A549 (cell line): ENCODE measurements at regions of chr9 and their contacts with region 1.

Region 1: DNA sequence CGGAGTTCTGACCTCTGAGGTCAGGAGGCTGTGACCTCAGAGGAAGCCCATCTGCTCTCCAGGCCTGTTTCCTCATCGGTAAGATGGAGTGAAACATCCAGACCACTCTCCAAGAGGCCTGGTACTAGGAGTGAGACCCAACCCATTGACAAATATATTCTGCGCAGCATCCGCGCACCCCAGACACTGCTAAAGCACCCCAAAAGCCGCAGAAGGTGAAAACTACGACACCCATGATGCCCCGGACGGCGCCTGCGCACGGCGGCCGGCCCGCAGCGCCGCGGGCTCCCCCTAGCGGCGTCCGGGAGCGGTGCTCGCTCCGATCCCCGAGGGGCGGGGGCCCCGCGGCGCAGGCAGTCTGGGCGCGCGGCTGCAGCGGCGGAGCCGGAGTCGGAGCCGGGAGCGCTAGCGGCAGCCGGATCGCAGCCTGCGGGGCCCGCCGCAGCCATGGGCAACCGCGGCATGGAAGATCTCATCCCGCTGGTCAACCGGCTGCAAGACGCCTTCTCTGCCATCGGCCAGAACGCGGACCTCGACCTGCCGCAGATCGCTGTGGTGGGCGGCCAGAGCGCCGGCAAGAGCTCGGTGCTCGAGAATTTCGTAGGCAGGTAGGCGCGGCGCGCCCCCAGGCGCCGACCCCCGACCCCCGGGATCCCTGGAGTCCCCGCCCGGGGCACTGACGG is at the start of gene DNM1:
- DNase-seq: peak; percentile 62 to 89
- ATAC-seq: peak; percentile 75 to 77
- H3K4me3 ChIP-seq: peak within 1 kb of the TSS; percentile 96
- H3K27ac ChIP-seq: peak within 1 kb of the TSS; percentile 95 to 99
- H3K4me1 ChIP-seq: peaks cover 53% of the 10 kb centered on the region
- CTCF ChIP-seq: peak; percentile 94
- EP300 ChIP-seq: no peak
- POLR2A ChIP-seq: peak; percentile 54
- RAD21 ChIP-seq: peak in 1 of 2 experiments; percentile 44; a peak in 2 of 5 replicates
- polyA plus RNA-seq, gene DNM1: 60.2 and 70.7 TPM in 2 replicates

Region 2: GRCh38 chr9:128182893-128183588 is 20.1 kb before region 1 on chr9:
- CTCF ChIA-PET with region 1: interaction called, 12 read pairs
- POLR2A ChIA-PET with region 1: no interaction called
- DNase-seq: no peak
- ATAC-seq: peak; percentile 12 to 43; a peak in 4 of 6 replicates
- H3K4me3 ChIP-seq: no peak overlapping the region
- H3K27ac ChIP-seq: no peak overlapping the region
- H3K4me1 ChIP-seq: no peaks in the 10 kb centered on the region
- CTCF ChIP-seq: no peak
- EP300 ChIP-seq: no peak
- POLR2A ChIP-seq: no peak
- RAD21 ChIP-seq: no peak

Region 3: GRCh38 chr9:128191406-128192046 is 11.6 kb before region 1 on chr9 and contains the start of gene CIZ1:
- CTCF ChIA-PET with region 1: interaction called, 20 read pairs
- POLR2A ChIA-PET with region 1: no interaction called
- DNase-seq: peak; percentile 84 to 85
- ATAC-seq: peak; percentile 86 to 90
- H3K4me3 ChIP-seq: peak within 1 kb of the TSS; percentile 86
- H3K27ac ChIP-seq: peak within 1 kb of the TSS; percentile 98 to 99
- H3K4me1 ChIP-seq: peaks cover 17% of the 10 kb centered on the region
- CTCF ChIP-seq: peak; percentile 92
- EP300 ChIP-seq: no peak
- POLR2A ChIP-seq: peak; percentile 59
- RAD21 ChIP-seq: peak in 1 of 2 experiments; percentile 37; a peak in 1 of 5 replicates
- polyA plus RNA-seq, gene CIZ1: 39.2 and 50.3 TPM in 2 replicates

Region 4: DNA sequence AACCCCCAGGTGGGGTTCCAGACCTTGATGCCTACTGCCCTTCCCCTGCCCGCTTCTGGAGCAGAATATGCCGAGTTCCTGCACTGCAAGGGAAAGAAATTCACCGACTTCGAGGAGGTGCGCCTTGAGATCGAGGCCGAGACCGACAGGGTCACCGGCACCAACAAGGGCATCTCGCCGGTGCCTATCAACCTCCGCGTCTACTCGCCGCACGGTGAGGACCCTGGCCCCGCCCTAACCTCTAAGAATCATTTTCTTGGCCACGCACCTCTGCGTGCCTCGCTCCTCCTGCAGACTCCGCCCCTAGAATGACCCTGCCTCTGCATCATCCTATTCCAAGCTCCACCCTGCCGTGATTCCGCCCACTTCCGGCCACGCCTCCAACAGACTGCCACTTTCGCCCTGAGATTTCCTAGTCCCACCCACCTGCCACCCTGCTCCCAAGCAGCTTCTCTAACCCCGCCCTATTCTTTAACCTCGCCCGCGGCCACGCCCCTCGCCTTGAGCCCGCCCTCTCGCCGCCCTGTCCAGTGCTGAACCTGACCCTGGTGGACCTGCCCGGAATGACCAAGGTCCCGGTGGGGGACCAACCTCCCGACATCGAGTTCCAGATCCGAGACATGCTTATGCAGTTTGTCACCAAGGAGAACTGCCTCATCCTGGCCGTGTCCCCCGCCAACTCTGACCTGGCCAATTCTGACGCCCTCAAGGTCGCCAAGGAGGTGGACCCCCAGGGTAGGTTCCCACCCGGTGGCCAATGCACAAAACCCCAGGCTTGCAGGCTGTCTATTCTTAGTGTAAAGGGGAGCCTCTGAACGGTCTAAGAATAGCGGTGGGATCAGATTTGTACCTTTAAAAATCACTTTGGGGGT is 15.6 kb after region 1 on chr9:
- CTCF ChIA-PET with region 1: interaction called, 82 read pairs
- POLR2A ChIA-PET with region 1: interaction called, 6 read pairs
- DNase-seq: peak; percentile 96 to 97
- ATAC-seq: peak; percentile 59 to 83
- H3K4me3 ChIP-seq: no peak overlapping the region; the same call in 2 of the 3 replicates
- H3K27ac ChIP-seq: peak overlapping the region; percentile 95 to 99
- H3K4me1 ChIP-seq: peaks cover 52% of the 10 kb centered on the region
- CTCF ChIP-seq: no peak
- EP300 ChIP-seq: no peak
- POLR2A ChIP-seq: no peak
- RAD21 ChIP-seq: no peak

Region 5: DNA sequence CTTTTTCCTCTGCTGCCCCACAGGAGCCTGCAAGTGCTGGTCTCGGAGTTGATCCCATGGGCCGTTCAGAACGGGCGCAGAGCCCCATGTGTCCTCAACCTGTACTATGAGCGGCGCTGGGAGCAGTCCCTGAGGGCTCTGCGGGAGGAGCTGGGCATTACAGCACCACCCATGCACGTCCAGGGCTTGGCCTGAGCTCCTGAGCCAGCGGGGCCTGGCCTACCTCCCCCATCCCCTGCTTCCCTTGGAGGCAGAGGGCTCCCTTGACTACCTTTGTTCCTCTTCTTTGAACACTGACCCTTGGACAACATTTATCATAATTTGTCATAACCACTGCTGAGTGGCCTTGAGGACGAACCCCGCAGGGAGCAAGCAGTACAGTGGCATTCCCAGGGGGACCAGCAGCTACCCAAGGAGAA is 130.3 kb after region 1 on chr9:
- CTCF ChIA-PET with region 1: no interaction called
- POLR2A ChIA-PET with region 1: no interaction called
- DNase-seq: no peak
- ATAC-seq: no peak
- H3K4me3 ChIP-seq: no peak overlapping the region
- H3K27ac ChIP-seq: no peak overlapping the region
- H3K4me1 ChIP-seq: peaks cover 5% of the 10 kb centered on the region; the same call in 1 of the 3 replicates
- CTCF ChIP-seq: no peak
- EP300 ChIP-seq: no peak
- POLR2A ChIP-seq: no peak
- RAD21 ChIP-seq: no peak

Region 6: GRCh38 chr9:128528445-128529160 is 325.4 kb after region 1 on chr9:
- CTCF ChIA-PET with region 1: no interaction called
- POLR2A ChIA-PET with region 1: no interaction called
- DNase-seq: no peak
- ATAC-seq: no peak
- H3K4me3 ChIP-seq: no peak overlapping the region
- H3K27ac ChIP-seq: no peak overlapping the region
- H3K4me1 ChIP-seq: no peaks in the 10 kb centered on the region
- CTCF ChIP-seq: no peak
- EP300 ChIP-seq: no peak
- POLR2A ChIP-seq: no peak
- RAD21 ChIP-seq: no peak